ENCODE measurements at regions of chr10 and their contacts with region 1.

Region 1: DNA sequence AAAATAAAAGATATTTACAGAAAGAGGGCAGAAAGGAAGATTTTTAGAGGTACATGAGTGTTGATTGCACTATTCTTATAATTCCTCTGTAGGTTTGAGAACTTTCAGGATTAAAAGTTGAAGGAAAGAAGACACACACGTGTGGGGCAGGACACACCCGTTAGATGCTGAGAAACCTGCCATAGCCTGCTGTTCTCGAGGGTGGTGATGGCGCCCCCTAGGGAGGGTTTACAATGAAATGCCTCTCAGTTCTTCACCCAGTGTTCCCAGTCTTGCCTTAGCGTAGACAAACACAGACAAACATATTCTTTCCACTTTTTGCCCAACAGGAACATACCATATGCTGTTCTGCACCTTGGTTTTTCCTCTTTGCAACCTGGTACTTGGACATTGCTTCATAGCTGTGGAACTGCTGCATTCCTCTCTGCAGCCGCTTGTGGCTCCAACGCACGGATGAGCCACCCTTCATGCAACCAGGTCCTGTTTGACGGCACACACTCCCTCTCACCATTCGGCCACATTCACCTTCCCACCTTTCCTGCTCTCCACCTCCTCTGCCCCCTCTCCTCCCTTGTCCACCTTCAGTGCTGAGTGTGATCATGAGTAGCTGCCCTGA is 23.3 kb upstream of the HSPA12A start:
- DNase-seq: peak; percentile 69
- ATAC-seq: peak; percentile 42
- H3K4me3 Mint-ChIP-seq: no peak overlapping the region
- H3K27ac Mint-ChIP-seq: no peak overlapping the region
- H3K4me1 Mint-ChIP-seq: no peaks in the 10 kb centered on the region
- H3K27me3 Mint-ChIP-seq: peaks cover 48% of the 10 kb centered on the region

Region 2: DNA sequence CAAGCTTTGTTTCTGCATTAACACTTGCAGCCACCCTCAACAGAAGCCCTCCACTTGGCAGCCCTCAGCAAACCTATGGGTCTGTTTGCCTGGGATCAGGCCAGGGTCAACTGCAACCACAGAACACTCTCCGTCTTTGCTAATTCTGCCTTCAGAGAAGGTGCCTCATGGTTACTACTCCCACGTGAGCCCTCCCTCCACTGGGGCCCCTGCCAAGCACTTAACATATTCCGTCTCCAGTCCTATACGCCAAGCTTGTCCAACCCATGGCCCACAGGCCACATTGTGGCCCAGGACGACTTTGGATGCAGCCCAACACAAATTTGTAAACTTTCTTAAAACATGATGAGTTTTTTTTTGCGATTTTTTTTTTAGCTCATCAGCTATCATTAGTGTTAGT is 78.0 kb before region 1 on chr10:
- CTCF ChIA-PET with region 1: interaction called, 4 read pairs
- POLR2A ChIA-PET with region 1: no interaction called
- intact Hi-C with region 1: loop called (anchors 1 kb)
- DNase-seq: no peak
- ATAC-seq: no peak
- H3K4me3 Mint-ChIP-seq: no peak overlapping the region
- H3K27ac Mint-ChIP-seq: no peak overlapping the region
- H3K4me1 Mint-ChIP-seq: no peaks in the 10 kb centered on the region
- H3K27me3 Mint-ChIP-seq: peaks cover 24% of the 10 kb centered on the region

Measured in activated CD4-positive, alpha-beta T cell treated with anti-CD3 and anti-CD28 coated beads for 36 hours (primary cell).